Endothelial cell of umbilical vein (primary cell): ENCODE measurements at regions of chrX and their contacts with region 1.

Region 1: GRCh38 chrX:7132335-7133049 is 15.0 kb upstream of the STS start:
- DNase-seq: peak; percentile 71
- H3K4me3 ChIP-seq: no peak overlapping the region
- H3K27ac ChIP-seq: peak overlapping the region; percentile 80
- H3K4me1 ChIP-seq: peaks cover 21% of the 10 kb centered on the region
- H3K27me3 ChIP-seq: no peaks in the 10 kb centered on the region
- CTCF ChIP-seq: peak; percentile 41 to 46
- POLR2A ChIP-seq: no peak

Region 2: DNA sequence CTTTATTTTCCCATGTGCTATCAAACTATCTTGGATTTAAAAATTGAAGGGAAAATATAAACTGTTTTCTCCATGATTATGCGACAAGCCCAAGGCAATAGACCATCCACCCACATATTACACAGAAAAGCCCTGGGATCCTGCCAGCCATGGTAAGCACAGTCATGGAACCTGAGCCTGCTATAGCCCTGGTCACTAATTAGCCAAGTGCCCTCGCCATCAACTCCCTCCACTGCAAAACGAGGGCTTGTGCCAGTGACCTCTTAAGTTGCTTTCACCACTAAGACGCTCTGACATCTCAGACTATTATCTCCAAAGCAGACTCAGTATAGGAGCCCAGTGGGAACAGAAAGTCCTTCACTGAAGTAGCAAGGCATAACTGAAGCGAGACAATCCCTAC is 973.0 kb before region 1 on chrX:
- CTCF ChIA-PET with region 1: no interaction called
- POLR2A ChIA-PET with region 1: no interaction called
- dilution Hi-C with region 1: no loop called
- intact Hi-C with region 1: no loop called
- DNase-seq: no peak
- H3K4me3 ChIP-seq: no peak overlapping the region
- H3K27ac ChIP-seq: no peak overlapping the region
- H3K4me1 ChIP-seq: no peaks in the 10 kb centered on the region
- H3K27me3 ChIP-seq: no peaks in the 10 kb centered on the region
- CTCF ChIP-seq: no peak
- POLR2A ChIP-seq: no peak

Region 3: DNA sequence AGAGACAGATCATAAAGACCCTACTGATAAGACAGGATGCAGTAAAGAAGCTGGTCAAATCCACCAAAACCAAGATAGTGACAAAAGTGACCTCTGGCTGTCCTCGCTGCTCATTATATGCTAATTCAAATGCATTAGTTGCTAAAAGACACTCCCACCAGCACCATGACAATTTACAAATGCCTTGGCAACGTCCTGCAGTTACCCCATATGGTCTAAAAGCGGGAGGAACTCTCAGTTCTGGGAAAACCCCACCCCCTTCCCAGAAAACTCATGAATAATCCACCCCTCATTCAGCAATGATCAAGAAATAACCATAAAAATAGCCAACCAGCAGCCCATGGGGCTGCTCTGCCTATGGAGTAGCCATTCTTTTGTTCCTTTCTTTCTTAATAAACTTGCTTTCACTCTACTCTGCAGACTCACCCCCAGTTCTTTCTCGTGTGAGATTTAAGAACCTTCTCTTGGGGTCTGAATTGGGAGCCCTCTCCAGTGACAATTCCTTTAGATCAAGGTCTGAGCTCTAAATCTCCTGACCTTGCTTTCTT is 202.1 kb before region 1 on chrX:
- CTCF ChIA-PET with region 1: no interaction called
- POLR2A ChIA-PET with region 1: no interaction called
- dilution Hi-C with region 1: no loop called
- intact Hi-C with region 1: no loop called
- DNase-seq: no peak
- H3K4me3 ChIP-seq: no peak overlapping the region
- H3K27ac ChIP-seq: no peak overlapping the region
- H3K4me1 ChIP-seq: no peaks in the 10 kb centered on the region
- H3K27me3 ChIP-seq: no peaks in the 10 kb centered on the region
- CTCF ChIP-seq: no peak
- POLR2A ChIP-seq: no peak

Region 4: GRCh38 chrX:7109838-7110793 is 22.4 kb before region 1 on chrX:
- CTCF ChIA-PET with region 1: interaction called, 3 read pairs
- POLR2A ChIA-PET with region 1: interaction called, 3 read pairs
- dilution Hi-C with region 1: no loop called
- intact Hi-C with region 1: loop called (anchors 1 kb)
- DNase-seq: no peak
- H3K4me3 ChIP-seq: peak overlapping the region in 1 of 3 experiments; percentile 11
- H3K27ac ChIP-seq: peak overlapping the region; percentile 93
- H3K4me1 ChIP-seq: peaks cover 28% of the 10 kb centered on the region
- H3K27me3 ChIP-seq: no peaks in the 10 kb centered on the region
- CTCF ChIP-seq: no peak
- POLR2A ChIP-seq: no peak

Region 5: DNA sequence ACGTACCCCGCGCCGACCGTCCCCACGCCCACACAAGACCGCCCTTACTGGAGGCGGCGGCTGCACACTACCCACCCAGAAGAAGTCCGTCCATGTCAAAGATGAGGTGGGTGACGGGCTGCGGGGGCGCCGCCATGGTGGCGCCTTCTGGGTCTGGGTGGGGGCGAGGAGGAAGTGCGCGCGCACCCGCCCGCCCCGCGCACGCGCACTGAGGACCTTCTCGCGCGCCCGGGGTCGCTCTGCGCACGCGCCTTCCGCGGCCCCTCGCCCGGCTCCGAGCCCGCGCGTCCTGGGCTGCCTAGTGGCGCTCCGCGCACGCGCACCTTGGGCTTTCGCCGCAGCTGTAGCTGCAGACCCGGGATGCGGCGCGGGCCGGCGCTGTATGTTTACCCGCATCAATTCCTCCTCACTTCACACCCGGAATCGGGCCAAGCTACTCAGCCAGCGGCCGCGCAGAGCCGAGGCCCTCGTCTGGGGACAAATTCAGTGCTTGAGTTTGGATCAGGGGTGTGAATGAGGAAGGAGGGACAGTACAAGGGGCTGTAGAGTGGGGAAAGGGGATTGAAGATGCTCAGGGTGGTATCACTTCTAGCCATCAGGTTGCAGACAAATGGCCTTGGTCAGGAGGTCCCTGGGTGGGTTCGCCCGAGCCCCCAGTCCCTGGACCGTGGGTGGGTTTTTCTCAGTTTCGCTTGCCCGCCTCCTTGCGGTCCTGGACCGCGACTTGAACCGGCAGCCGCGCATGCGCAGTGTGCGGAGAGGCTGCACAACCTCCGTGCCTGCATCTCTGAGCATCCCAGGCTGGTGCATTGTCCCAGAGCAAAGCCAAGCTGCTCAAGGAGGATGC is 15.7 kb after region 1 on chrX and contains the start of gene PUDP:
- CTCF ChIA-PET with region 1: interaction called, 5 read pairs
- POLR2A ChIA-PET with region 1: interaction called, 3 read pairs
- dilution Hi-C with region 1: no loop called
- intact Hi-C with region 1: loop called (anchors 1 kb)
- DNase-seq: peak; percentile 77
- H3K4me3 ChIP-seq: peak within 1 kb of the TSS; percentile 25 to 86 (median 67)
- H3K27ac ChIP-seq: peak within 1 kb of the TSS; percentile 58
- H3K4me1 ChIP-seq: no peaks in the 10 kb centered on the region
- H3K27me3 ChIP-seq: no peaks in the 10 kb centered on the region
- CTCF ChIP-seq: peak in 1 of 2 donors; percentile 39
- POLR2A ChIP-seq: peak; percentile 64
- total RNA-seq, gene PUDP: 22.5 and 24.5 TPM in 2 replicates

Region 6: DNA sequence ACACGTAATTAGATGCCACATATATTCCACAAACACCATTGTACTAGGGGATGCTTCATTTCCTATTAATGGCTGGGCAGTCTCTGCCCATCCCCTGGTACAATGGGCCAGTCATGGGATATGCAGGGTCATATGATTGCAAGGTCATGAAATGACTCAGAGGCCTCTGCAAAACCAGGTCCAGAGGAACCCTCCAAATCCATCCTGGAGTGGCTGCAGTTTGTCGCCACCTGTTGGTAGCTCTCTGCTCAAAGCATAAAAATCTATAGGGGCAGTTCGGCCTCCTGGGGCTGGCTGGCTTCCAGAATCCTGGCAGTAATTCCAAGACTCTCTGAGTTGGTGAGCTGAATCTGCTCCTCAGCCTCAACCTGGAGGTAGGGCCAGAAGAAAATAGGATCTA is 38.4 kb after region 1 on chrX:
- CTCF ChIA-PET with region 1: interaction called, 3 read pairs
- POLR2A ChIA-PET with region 1: no interaction called
- dilution Hi-C with region 1: no loop called
- intact Hi-C with region 1: loop called (anchors 1 kb)
- DNase-seq: peak; percentile 10
- H3K4me3 ChIP-seq: no peak overlapping the region
- H3K27ac ChIP-seq: no peak overlapping the region
- H3K4me1 ChIP-seq: no peaks in the 10 kb centered on the region
- H3K27me3 ChIP-seq: no peaks in the 10 kb centered on the region
- CTCF ChIP-seq: peak; percentile 22 to 37
- POLR2A ChIP-seq: no peak

Region 7: GRCh38 chrX:7314425-7314824 is 181.9 kb after region 1 on chrX:
- CTCF ChIA-PET with region 1: no interaction called
- POLR2A ChIA-PET with region 1: no interaction called
- dilution Hi-C with region 1: no loop called
- intact Hi-C with region 1: no loop called
- DNase-seq: no peak
- H3K4me3 ChIP-seq: no peak overlapping the region
- H3K27ac ChIP-seq: no peak overlapping the region
- H3K4me1 ChIP-seq: no peaks in the 10 kb centered on the region
- H3K27me3 ChIP-seq: no peaks in the 10 kb centered on the region
- CTCF ChIP-seq: no peak
- POLR2A ChIP-seq: no peak

Region 8: DNA sequence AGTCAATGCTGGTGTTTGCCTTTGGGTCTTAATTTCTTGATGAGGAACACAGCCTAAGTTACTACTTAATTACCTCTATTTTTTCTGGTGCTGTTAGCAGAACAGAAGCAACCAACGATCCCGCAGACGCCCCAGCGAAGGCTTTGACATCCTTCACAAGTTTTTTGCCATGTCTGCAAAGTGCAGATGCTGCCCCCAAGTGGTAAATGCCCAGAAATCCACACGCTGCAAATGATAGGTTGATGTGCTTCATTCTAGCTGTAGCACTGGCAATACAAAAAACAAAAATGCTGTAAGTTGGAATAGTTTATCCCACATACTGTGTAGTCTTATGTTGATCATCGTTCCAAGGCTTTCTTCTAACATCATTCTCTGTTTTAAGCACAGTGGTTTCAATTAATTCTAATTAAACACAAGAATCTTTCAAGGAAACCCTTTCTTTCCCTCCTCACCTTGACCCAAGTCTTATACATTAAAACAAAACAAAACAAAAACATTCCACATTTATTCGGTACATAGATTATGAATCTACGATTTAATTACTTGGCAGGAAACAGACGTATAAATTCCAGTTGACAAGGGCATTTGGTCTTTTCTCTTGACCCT is 793.5 kb after region 1 on chrX:
- CTCF ChIA-PET with region 1: no interaction called
- POLR2A ChIA-PET with region 1: no interaction called
- dilution Hi-C with region 1: no loop called
- intact Hi-C with region 1: loop called (anchors 2 kb)
- DNase-seq: peak; percentile 51
- H3K4me3 ChIP-seq: no peak overlapping the region
- H3K27ac ChIP-seq: no peak overlapping the region
- H3K4me1 ChIP-seq: peaks cover 5% of the 10 kb centered on the region
- H3K27me3 ChIP-seq: no peaks in the 10 kb centered on the region
- CTCF ChIP-seq: peak; percentile 56 to 65
- POLR2A ChIP-seq: no peak